ENCODE measurements at regions of chr6 and their contacts with region 1.

Region 1: DNA sequence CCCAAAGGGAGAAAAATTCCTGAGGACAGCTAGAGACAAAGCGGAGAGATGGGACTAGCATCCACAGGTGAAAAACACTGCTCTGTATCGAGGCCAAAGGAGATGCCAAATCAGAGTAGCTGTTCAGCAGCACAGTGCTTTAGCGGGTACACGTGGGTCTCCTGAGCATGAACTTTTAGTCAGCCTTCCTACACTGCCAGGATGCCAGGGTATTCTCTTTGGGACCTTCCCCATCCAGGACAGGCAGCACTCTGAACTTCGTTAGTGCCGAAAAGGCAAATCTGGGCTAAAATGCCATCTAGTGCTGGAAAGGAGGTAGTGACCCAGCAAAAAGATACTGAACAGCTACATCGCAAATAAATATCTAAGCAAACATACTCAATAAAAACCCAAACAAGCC is 64.9 kb downstream of the C6orf58 start:
- DNase-seq: peak; percentile 61
- H3K4me3 Mint-ChIP-seq: no peak overlapping the region
- H3K27ac Mint-ChIP-seq: no peak overlapping the region
- H3K4me1 Mint-ChIP-seq: no peaks in the 10 kb centered on the region
- H3K27me3 Mint-ChIP-seq: peaks cover 4% of the 10 kb centered on the region

Region 2: DNA sequence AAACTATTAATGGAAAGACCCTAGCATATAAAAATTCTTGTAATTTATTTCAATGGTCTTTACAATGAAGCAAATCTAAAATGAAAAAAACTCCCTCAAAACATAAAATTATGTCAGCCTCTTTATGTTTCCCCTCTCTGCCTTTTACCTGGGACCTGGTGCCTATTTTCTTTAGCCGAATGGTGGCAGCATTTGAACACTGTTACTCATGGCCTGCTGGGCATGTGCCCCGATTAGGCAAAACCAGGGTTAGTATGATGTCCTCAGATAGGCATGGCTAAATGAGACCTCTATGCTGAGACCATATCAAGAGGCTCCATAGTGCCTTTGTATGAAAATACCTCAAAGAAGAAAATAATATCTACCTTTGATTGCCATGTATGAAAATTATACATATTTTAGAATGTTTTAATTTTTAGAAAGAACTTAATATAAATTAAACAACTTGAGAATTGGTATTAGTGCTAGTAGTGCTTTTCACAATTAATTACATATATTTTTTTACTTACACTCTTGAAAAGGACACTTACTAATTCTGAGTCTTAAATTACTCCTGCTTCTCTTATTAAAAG is 87.4 kb before region 1 on chr6:
- intact Hi-C with region 1: loop called (anchors 1 kb)
- DNase-seq: peak; percentile 70
- H3K4me3 Mint-ChIP-seq: no peak overlapping the region
- H3K27ac Mint-ChIP-seq: no peak overlapping the region
- H3K4me1 Mint-ChIP-seq: no peaks in the 10 kb centered on the region
- H3K27me3 Mint-ChIP-seq: peaks cover 30% of the 10 kb centered on the region

Region 3: GRCh38 chr6:127811900-127812570 is 170.1 kb after region 1 on chr6:
- intact Hi-C with region 1: no loop called
- DNase-seq: no peak
- H3K4me3 Mint-ChIP-seq: no peak overlapping the region
- H3K27ac Mint-ChIP-seq: no peak overlapping the region
- H3K4me1 Mint-ChIP-seq: peaks cover 36% of the 10 kb centered on the region
- H3K27me3 Mint-ChIP-seq: no peaks in the 10 kb centered on the region

Measured in activated CD4-positive, alpha-beta T cell treated with anti-CD3 and anti-CD28 coated beads, Interleukin-2, amount 10 ng/mL, durations not matched to agents 24 days and 14 days (primary cell).